GM13976 (cell line): ENCODE measurements at regions of chr17 and their contacts with region 1.

Region 1: GRCh38 chr17:17681187-17681848 is at the start of gene RAI1:
- DNase-seq: peak; percentile 88
- CTCF ChIP-seq: peak; percentile 95

Region 2: DNA sequence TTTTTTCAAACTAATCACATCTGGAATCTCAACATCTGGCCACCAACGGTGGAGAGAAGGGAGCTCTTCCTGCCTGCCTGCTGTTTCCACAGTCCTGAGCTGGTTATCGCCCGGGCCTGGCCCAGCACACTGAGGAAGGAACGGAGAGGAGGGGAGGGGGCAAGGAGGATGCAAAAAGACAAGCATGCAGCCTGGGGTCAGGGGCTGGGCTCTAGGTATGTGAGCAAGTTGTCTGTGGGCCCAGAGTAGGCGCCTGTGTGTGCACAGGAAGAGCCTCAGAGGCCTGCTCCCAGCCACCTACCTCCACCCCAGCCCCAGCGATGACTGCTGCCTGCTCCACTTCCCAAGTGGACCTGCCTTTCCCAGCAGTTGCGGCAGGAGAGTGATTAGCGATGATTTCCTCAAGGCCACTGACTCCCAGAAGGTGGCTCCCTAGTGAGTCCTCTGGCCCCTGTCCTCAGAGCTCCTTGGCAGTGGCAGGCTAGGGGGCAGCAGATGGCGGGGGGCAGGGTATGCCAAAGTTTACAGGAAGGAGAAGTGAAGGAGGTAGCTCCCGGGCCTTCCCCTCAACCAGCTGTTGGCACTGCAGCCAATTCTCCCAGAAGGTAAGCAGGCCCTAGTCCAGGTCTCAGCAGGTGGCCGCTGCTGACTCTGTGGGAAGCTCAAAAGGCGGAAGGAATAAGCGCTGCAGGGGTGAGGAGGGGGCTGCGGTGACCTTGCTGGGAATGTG is 158.2 kb before region 1 on chr17:
- in situ Hi-C with region 1: no loop called
- DNase-seq: no peak
- CTCF ChIP-seq: no peak

Region 3: GRCh38 chr17:17823433-17824118 is 142.3 kb after region 1 on chr17:
- in situ Hi-C with region 1: no loop called
- DNase-seq: peak; percentile 99
- CTCF ChIP-seq: no peak

Region 4: DNA sequence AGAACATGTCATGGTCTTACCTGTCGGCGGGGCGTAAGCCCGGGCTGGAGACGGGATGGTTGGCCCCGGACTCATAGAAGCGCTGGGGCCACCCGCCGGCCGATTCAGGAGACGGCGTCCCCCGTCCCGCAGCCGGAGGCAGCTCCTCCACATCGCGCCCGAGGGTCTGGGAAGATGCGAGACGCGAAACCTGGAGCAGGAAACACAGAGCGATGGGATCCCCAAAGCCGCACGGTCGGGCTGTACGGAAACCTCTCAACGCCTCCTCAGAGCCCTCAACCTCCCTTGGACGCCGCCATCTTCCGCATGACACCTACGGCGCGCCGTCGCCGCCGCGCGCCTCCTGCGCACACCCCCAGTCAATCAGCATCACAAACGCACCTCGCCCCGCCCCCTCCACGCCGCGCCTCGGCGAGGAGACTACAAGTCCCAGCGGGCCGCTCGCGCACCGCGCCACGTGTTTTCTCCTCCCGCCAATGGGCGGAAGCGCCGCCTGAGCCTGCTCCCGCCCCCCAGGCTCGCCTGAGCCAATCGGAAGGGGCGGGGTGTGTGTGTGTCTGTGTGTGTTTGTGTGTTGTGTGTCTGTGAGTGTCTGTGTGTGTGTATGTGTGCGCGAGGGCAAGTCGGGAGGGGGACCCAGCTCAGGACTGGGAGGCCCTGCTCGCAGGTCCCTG is 357.7 kb after region 1 on chr17 and contains the starts of genes ATPAF2 and GID4:
- in situ Hi-C with region 1: loop called (anchors 10 kb)
- DNase-seq: peak; percentile 99
- CTCF ChIP-seq: no peak